ENCODE measurements at regions of chr1 and their contacts with region 1.

Region 1: DNA sequence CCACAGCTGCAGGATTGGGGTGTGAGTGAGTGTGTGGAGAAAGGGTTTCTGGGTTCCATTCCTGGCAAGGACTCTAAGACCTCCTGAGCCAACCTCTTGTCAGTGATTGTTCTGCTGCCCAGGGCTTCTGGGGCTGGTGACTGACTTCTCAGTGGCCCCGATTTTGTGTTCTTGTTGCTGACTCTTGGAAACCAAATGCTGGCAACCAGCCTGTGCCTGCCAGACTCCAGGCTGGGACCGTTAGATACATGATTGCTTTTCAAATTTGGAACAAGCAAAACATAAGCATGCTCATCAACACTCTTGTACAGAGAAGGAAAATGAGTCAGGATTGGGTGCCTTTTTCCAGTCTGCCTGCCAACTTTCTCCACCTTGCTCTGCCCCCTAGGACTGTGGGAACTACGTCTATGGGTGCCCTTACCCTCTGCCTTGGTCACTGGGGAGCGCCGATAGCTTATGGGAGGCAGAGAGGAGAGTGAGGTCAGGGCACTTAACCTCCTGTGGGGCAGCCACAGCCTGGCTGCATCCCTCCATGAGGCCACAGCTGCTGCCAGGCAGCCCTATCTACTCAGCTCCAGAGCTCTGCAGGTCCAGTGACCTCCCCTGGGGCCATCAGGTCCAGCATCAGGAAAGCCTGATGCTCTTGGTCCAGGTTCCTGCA is 39.3 kb upstream of the EPS8L3 start:
- DNase-seq: no peak
- H3K4me3 Mint-ChIP-seq: peak overlapping the region; percentile 66
- H3K27ac Mint-ChIP-seq: peak overlapping the region; percentile 100
- H3K4me1 Mint-ChIP-seq: peaks cover 89% of the 10 kb centered on the region
- H3K27me3 Mint-ChIP-seq: no peaks in the 10 kb centered on the region

Region 2: GRCh38 chr1:109773146-109773899 is 29.7 kb before region 1 on chr1:
- CTCF ChIA-PET with region 1: interaction called, 21 read pairs
- POLR2A ChIA-PET with region 1: interaction called, 8 read pairs
- DNase-seq: peak; percentile 79
- H3K4me3 Mint-ChIP-seq: no peak overlapping the region
- H3K27ac Mint-ChIP-seq: no peak overlapping the region
- H3K4me1 Mint-ChIP-seq: peaks cover 17% of the 10 kb centered on the region
- H3K27me3 Mint-ChIP-seq: peaks cover 7% of the 10 kb centered on the region

Region 3: GRCh38 chr1:109821221-109821669 is 18.2 kb after region 1 on chr1:
- CTCF ChIA-PET with region 1: no interaction called
- POLR2A ChIA-PET with region 1: interaction called, 23 read pairs
- DNase-seq: peak; percentile 64
- H3K4me3 Mint-ChIP-seq: no peak overlapping the region
- H3K27ac Mint-ChIP-seq: peak overlapping the region; percentile 77
- H3K4me1 Mint-ChIP-seq: peaks cover 78% of the 10 kb centered on the region
- H3K27me3 Mint-ChIP-seq: no peaks in the 10 kb centered on the region

Region 4: DNA sequence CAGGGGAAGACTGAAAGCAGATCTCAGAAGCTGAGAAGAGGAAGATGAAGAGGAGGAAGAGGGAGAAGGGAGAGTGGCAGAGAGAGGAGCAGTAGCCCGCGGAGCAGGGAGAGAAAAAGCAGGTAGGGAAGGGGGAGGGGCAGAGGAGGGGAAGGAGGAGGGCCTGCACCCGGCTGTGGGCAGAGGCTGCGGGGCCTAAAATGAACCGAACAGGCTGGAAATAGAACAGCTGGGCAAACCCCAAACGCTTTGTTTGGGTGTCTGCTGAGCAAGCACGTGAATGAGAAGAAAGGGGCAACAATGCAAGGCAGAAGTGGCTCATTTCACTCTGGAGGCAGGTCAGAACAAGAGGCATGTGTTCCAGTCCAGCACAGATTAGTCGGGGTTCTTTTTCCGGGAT is 440.5 kb after region 1 on chr1:
- CTCF ChIA-PET with region 1: no interaction called
- POLR2A ChIA-PET with region 1: no interaction called
- DNase-seq: no peak
- H3K4me3 Mint-ChIP-seq: no peak overlapping the region
- H3K27ac Mint-ChIP-seq: no peak overlapping the region
- H3K4me1 Mint-ChIP-seq: no peaks in the 10 kb centered on the region
- H3K27me3 Mint-ChIP-seq: no peaks in the 10 kb centered on the region

Measured in activated CD4-positive, alpha-beta memory T cell treated with anti-CD3 and anti-CD28 coated beads, Interleukin-2, amount 10 ng/mL, durations not matched to agents 7 days and 5 days (primary cell).